Activated CD4-positive, alpha-beta memory T cell treated with anti-CD3 and anti-CD28 coated beads for 36 hours (primary cell): ENCODE measurements at regions of chr1 and their contacts with region 1.

Region 1: DNA sequence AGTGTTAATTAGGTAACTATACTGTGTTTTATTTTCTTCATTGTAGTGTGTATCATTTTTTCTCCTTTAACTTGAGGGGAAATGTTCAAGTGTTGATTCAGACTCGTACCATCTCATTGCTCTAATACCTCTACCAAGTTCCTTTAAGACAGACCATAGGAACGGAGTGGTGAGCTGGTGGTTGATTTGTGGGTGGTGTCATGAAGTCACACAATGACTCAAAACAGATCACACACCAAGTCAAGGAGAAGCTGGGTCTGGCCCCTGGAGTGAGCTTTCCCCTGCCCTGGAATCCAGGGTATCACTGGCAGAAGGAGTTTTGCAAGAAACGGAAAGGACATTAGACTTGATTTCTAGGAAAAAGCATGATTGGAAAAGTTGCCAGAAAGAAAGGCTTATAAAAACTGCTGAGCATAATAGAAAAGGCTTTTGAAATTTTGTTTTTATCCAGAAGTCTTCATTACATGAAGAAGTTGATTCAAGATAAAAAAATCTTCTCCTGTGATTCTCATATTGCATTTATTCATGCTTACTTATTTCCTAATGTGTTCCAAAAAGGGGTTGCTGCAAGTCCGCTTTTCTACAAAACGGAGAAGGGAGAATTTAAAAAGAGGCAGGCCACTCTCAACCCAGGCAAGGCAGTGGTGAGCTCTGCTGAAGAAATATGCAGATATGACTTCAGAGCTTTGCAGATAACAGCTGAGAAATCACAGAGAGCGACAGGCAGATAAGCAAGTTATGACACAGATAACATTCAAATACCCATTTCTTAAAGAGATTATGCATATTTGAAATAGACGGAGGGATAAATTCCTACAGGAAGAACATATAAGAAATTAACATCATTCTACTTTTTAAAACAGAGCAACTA is 79.7 kb downstream of the TBX19 start:
- DNase-seq: peak; percentile 73
- H3K4me3 Mint-ChIP-seq: no peak overlapping the region
- H3K27ac Mint-ChIP-seq: peak overlapping the region; percentile 39
- H3K4me1 Mint-ChIP-seq: peaks cover 38% of the 10 kb centered on the region
- H3K27me3 Mint-ChIP-seq: no peaks in the 10 kb centered on the region

Region 2: DNA sequence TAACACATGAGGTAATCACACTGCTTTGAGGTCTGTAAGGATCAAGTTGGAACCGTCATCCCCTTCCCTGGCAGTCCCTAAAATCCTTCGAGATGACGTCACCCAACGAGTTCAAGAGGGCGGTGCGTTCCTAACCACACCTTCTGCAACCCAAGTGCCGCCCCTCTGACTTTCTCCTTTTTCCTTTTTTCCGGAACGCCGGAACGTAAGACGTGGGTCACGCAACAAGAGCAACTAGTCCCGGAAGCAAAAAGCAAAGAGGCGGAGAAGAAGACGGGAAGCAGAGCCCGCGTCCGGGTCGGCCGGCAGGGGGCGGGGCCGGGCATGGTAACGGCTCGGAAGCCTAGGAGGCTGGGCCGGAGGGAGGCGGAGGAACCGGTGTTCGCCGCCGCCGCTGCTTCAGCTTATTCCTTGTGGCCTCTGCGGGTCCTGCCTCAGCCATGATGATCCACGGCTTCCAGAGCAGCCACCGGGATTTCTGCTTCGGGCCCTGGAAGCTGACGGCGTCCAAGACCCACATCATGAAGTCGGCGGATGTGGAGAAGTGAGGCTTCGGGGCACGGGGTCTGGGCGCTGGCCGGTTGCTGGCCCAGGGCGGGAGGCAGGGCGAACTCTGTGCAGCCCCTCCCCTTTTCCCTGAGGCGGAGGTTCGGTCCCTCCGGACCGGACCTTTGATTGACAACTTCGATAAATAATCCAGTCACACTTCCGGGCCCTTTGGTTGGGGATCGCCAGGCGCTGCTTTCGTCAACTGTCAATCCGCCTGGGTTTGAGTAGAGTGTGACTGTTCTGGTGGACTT is 181.5 kb before region 1 on chr1 and contains the start of gene TIPRL:
- CTCF ChIA-PET with region 1: no interaction called
- POLR2A ChIA-PET with region 1: no interaction called
- intact Hi-C with region 1: loop called (anchors 1 kb)
- DNase-seq: peak; percentile 96
- H3K4me3 Mint-ChIP-seq: no peak within 1 kb of the TSS
- H3K27ac Mint-ChIP-seq: no peak within 1 kb of the TSS
- H3K4me1 Mint-ChIP-seq: peaks cover 10% of the 10 kb centered on the region
- H3K27me3 Mint-ChIP-seq: no peaks in the 10 kb centered on the region
- total RNA-seq, gene TIPRL: 51.1 to 54.2 TPM

Region 3: GRCh38 chr1:168225476-168226190 is 134.8 kb before region 1 on chr1 and contains the start of gene SFT2D2:
- CTCF ChIA-PET with region 1: no interaction called
- POLR2A ChIA-PET with region 1: no interaction called
- intact Hi-C with region 1: loop called (anchors 2 kb)
- DNase-seq: peak; percentile 83
- H3K4me3 Mint-ChIP-seq: peak within 1 kb of the TSS; percentile 91
- H3K27ac Mint-ChIP-seq: peak within 1 kb of the TSS; percentile 84
- H3K4me1 Mint-ChIP-seq: peaks cover 43% of the 10 kb centered on the region
- H3K27me3 Mint-ChIP-seq: peaks cover 7% of the 10 kb centered on the region
- total RNA-seq, gene SFT2D2: 52.3 to 52.9 TPM

Region 4: DNA sequence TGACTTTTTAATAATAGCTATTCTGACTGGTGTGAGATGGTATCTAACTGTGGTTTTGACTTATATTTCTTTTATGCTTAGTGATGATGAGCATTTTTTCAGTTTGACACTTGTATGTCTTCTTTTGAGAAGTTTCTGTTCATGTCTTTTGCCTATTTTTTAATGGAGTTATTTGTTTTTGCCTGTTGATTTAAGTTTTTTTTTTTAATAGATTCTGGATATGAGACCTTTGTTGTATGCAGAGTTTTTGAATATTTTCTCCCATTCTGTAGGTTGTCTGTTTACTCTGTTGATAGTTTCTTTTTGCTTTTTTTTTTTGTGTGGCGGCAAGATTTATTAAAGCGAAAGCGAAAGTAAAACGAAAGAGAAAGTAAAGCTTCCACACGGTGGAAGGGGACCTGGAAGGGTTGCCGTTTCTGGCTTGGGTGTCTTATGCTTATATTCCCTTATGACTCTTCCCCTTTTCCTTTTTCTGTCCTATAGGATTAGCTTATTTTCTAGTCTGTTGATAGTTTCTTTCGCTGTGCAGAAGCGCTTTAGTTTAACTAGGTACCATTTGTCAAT is 12.2 kb before region 1 on chr1:
- CTCF ChIA-PET with region 1: interaction called, 126 read pairs
- POLR2A ChIA-PET with region 1: interaction called, 3 read pairs
- intact Hi-C with region 1: no loop called
- DNase-seq: no peak
- H3K4me3 Mint-ChIP-seq: peak overlapping the region; percentile 79
- H3K27ac Mint-ChIP-seq: peak overlapping the region; percentile 86
- H3K4me1 Mint-ChIP-seq: peaks cover 17% of the 10 kb centered on the region
- H3K27me3 Mint-ChIP-seq: no peaks in the 10 kb centered on the region

Region 5: DNA sequence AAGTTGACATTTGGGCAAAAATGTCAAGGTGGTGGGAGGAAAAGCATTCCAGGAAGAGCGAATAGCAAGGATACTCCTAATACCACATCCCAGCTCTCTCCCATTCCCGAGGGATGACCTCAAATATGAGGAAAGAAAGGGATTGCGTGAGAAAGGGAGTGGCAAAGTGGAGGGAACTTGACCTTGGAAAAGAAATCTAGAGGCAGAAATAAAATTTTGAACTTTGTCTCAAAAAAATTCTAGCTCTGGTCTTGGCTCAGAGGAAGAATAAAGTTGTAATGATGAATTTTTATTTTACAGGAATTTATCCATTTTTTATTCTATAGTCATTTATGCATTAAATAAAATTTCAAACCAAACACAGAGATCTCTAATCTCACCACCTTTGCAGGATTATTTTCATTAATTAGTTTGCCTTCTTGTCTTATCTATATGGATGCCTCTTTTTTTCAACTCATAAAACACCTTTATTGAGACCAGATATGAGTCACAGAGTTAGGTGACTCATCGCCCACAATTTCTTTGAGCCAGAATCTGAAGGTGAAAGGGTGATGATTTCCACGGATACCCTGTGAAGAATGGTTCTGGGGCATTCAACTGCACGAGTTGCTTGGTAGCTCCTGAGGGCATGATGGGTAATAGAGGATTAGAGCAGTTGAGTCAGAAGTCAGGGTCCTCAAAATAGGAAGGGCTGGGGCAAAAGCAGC is 48.3 kb after region 1 on chr1:
- CTCF ChIA-PET with region 1: no interaction called
- POLR2A ChIA-PET with region 1: no interaction called
- intact Hi-C with region 1: loop called (anchors 1 kb)
- DNase-seq: peak; percentile 75
- H3K4me3 Mint-ChIP-seq: peak overlapping the region; percentile 9
- H3K27ac Mint-ChIP-seq: peak overlapping the region; percentile 53
- H3K4me1 Mint-ChIP-seq: peaks cover 40% of the 10 kb centered on the region
- H3K27me3 Mint-ChIP-seq: no peaks in the 10 kb centered on the region

Region 6: DNA sequence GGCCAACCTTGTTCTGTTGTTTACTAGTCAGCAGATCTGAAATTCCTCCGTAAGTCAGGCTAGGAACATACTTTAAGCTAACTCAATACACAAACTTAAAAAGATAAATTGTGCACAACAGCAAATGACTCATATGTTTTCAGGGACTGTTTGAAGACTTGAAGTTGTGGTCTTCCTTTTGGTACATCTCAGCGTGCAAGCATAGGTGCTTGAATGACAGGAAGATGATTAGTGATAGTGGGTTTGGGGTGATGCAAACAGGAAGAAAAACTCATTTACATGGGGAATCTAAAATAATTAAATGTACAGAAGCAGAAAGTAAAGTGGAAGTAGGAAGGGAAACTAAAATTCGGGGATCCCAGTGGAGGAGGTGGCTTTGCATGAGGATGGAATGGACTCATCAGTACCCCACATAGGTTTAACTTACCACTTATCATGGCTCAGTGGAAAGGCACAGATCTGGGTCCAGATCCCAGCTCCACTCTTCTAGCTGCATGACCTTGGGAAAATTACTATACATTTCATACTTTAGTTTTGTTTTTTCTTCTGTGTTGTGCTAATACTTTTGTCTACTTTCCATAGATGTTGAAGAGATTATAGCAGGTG is 61.1 kb after region 1 on chr1:
- CTCF ChIA-PET with region 1: no interaction called
- POLR2A ChIA-PET with region 1: no interaction called
- intact Hi-C with region 1: loop called (anchors 2 kb)
- DNase-seq: peak; percentile 29
- H3K4me3 Mint-ChIP-seq: peak overlapping the region; percentile 49
- H3K27ac Mint-ChIP-seq: peak overlapping the region; percentile 78
- H3K4me1 Mint-ChIP-seq: peaks cover 33% of the 10 kb centered on the region
- H3K27me3 Mint-ChIP-seq: no peaks in the 10 kb centered on the region

Region 7: DNA sequence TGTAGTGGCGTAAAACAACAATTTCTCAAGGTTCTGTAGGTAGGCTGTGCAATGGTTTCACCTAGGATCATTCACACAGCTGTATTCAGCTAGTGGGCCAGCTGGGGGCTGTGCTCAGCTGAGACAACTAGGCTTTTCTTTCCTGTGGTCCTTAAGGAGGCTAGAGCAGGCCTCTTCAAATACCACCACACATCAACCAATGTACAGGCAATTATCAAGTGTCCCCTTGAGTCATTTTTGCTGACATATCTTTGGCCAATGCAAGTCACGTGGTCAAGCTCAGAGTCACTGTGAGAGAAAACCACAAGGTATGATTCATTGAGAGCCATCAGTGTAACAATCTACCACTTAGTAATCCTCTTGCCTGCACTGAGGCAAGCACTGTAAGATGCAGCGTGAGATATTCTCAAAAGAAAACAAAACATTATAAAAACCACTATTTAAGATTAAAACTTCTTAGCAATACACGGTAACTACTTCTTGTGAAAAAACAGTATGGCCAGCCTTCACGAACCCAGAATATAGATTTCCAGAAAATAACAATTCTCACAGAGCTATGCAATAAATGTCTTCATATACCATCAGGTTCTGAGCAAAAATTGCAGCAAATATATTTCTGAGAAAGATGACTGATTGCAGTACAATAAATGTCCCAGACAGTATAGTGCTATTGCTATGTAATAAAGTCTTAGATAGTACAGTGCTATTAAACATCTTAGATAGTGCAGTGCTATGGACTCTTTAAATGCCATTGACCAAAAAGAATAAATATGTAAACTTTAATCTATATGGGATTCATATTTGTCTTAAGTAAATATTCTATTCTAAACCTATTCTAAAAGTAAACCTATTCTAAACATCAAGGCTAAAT is 951.9 kb after region 1 on chr1:
- CTCF ChIA-PET with region 1: no interaction called
- POLR2A ChIA-PET with region 1: no interaction called
- intact Hi-C with region 1: no loop called
- DNase-seq: peak; percentile 58
- H3K4me3 Mint-ChIP-seq: no peak overlapping the region
- H3K27ac Mint-ChIP-seq: no peak overlapping the region
- H3K4me1 Mint-ChIP-seq: peaks cover 16% of the 10 kb centered on the region
- H3K27me3 Mint-ChIP-seq: no peaks in the 10 kb centered on the region